ENCODE measurements at regions of chr3 and their contacts with region 1.

Region 1: DNA sequence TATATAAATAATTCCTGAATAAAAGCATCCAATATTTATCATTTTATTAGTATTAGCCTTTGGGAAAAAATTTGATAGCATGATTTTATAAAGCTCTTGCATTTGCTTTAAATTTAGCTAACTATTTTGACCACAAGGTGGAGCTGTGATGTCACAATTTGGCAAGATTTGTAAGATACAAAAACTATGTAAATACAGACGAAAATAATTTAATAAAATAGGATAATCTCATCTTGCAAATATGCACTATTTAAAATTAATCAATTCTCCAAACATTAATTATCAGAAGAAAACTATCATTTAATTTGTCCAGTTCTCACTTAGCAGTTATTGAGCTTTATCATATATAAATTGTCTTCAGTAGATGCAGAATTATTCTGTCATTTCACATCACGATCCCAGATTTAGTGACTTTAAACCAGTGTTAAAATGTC is 95.4 kb downstream of the PLOD2 start:
- DNase-seq: no peak
- ATAC-seq: no peak
- H3K4me3 ChIP-seq: no peak overlapping the region
- H3K27ac ChIP-seq: no peak overlapping the region
- H3K4me1 ChIP-seq: no peaks in the 10 kb centered on the region
- H3K27me3 ChIP-seq: no peaks in the 10 kb centered on the region
- CTCF ChIP-seq: peak; percentile 42 to 74 (median 48)
- POLR2A ChIP-seq: no peak

Region 2: DNA sequence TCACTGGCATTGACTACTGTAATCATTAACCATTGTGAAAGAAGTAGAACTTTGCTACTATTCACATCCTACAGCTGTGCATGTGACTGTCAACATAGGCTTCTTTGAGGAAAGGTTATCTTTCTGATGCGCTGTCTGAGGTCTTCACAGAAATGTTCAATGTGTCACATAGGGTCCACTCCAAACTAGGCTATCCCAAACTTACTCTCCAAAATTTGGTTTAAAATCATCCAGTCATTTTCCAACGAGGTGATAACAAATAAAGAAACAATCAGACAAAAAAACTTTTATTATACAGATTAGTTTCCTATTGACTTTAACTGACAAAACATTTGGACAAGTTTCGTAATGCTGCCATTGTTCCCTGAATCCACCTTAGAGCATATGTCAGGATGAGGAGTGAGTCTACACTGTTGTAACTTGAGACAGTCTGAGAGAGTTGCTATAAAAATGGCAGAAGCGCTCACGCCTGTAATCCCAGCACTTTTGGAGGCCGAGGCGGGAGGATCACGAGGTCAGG is 416.2 kb before region 1 on chr3:
- in situ Hi-C with region 1: no loop called
- intact Hi-C with region 1: no loop called
- DNase-seq: no peak
- ATAC-seq: no peak
- H3K4me3 ChIP-seq: no peak overlapping the region
- H3K27ac ChIP-seq: no peak overlapping the region
- H3K4me1 ChIP-seq: no peaks in the 10 kb centered on the region
- H3K27me3 ChIP-seq: no peaks in the 10 kb centered on the region
- CTCF ChIP-seq: no peak
- POLR2A ChIP-seq: no peak

Region 3: DNA sequence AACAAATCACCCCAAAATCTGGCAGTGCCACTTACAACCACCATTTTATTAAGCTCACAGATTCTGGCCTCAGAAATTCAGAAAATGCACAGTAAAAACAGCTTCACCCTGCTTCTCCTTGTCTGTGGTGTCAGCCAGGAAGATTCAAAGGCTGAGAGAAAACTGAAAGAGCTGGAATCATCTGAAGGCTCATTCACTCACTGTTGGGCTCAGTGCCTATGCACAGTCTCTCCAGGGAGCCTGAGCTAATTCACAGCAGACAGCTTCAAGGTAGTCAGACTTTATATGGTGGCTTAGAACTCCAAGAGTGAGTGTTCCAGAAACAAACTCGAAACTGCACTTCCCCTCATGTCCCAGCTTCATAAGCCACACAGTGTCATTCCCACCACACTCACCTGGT is 111.9 kb after region 1 on chr3:
- in situ Hi-C with region 1: loop called in 2 of 4 experiments (anchors 10 kb)
- intact Hi-C with region 1: no loop called
- DNase-seq: no peak
- ATAC-seq: no peak
- H3K4me3 ChIP-seq: no peak overlapping the region
- H3K27ac ChIP-seq: no peak overlapping the region
- H3K4me1 ChIP-seq: no peaks in the 10 kb centered on the region
- H3K27me3 ChIP-seq: no peaks in the 10 kb centered on the region
- CTCF ChIP-seq: no peak
- POLR2A ChIP-seq: no peak

Region 4: GRCh38 chr3:146313411-146314111 is 248.0 kb after region 1 on chr3:
- in situ Hi-C with region 1: loop called in 1 of 4 experiments (anchors 25 kb)
- intact Hi-C with region 1: no loop called
- DNase-seq: no peak
- ATAC-seq: peak in 1 of 2 donors; percentile 69
- H3K4me3 ChIP-seq: no peak overlapping the region
- H3K27ac ChIP-seq: no peak overlapping the region
- H3K4me1 ChIP-seq: no peaks in the 10 kb centered on the region
- H3K27me3 ChIP-seq: no peaks in the 10 kb centered on the region
- CTCF ChIP-seq: no peak
- POLR2A ChIP-seq: no peak

Region 5: DNA sequence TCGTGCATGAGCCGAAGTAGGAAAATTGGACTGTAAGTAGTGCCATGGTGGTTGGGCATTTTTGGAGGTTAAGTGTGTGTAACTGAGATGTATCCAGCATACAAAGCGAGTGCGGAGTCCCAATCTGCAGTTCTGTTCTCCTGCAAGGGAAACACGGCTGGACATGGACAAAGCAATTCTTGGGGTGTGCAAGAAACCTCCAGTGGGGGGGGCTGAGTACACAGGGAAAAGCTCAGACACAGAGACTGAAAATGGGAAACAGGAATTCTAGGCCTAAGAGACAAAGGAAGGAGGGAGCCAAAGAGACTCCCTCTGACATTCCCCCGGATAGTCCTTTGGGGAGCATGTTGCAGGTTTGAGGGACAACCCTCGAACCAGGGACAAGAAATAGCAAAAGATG is 268.6 kb after region 1 on chr3:
- in situ Hi-C with region 1: loop called in 3 of 4 experiments (anchors 10 kb)
- intact Hi-C with region 1: loop called (anchors 5 kb)
- DNase-seq: no peak
- ATAC-seq: no peak
- H3K4me3 ChIP-seq: no peak overlapping the region
- H3K27ac ChIP-seq: no peak overlapping the region
- H3K4me1 ChIP-seq: no peaks in the 10 kb centered on the region
- H3K27me3 ChIP-seq: no peaks in the 10 kb centered on the region
- CTCF ChIP-seq: no peak
- POLR2A ChIP-seq: no peak

Region 6: GRCh38 chr3:146638718-146639117 is 573.1 kb after region 1 on chr3:
- in situ Hi-C with region 1: no loop called
- intact Hi-C with region 1: loop called (anchors 5 kb)
- DNase-seq: no peak
- ATAC-seq: no peak
- H3K4me3 ChIP-seq: no peak overlapping the region
- H3K27ac ChIP-seq: no peak overlapping the region
- H3K4me1 ChIP-seq: no peaks in the 10 kb centered on the region
- H3K27me3 ChIP-seq: no peaks in the 10 kb centered on the region
- CTCF ChIP-seq: peak in 1 of 5 experiments; percentile 16
- POLR2A ChIP-seq: no peak

Measured in gastrocnemius medialis (tissue), 4 donors.